GM12878 (cell line): ENCODE measurements at regions of chr2 and their contacts with region 1.

Region 1: DNA sequence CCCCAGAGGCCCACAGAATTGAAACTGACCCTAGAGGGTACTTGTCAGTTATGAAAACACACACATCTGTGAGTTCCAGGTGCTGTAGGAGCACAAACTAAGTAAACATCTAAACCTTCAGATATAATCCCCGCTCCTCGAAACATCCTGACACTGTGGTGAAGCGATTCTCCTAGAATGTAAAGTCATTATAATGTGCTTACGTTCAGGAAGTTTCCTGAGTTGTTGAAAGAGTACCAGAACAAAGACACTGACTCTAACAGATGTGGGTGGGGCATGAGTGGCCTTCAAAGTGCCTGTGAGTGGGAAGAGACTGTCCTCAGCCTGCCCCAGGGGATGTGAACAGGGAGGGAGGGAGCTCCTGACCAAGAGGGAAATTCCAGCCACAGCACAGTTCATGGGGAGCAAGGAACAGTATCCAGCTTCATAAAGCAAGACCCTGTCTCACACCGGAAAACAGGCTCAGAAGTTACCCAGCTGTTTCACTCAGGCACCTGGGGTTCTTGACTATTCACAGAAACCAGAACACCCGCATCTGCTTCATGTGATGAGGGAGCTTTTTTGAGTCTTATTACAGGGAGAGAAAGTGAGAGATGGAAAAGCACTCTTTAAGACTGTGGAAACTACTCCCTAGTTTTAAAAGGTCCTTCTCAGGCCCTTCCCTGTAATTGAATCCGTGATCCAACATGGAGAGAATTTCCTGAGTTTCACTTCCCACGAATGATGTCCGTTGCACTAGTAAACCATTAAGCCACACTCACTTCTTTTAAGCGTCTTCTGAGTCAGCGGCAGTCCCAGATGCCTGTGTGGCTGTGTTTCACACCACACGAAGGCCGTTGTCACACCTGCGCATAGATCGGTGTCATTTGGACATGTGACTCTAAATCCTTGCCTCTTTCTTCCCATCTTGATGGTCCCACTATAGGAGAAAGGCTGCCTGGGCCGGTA is 88.6 kb upstream of the EML6 start:
- DNase-seq: peak; percentile 93
- ATAC-seq: peak; percentile 81
- H3K4me3 ChIP-seq: peak overlapping the region; percentile 38
- H3K27ac ChIP-seq: peak overlapping the region; percentile 95
- H3K4me1 ChIP-seq: peaks cover 57% of the 10 kb centered on the region
- H3K27me3 ChIP-seq: no peaks in the 10 kb centered on the region
- CTCF ChIP-seq: no peak
- EP300 ChIP-seq: peak; percentile 81 to 84; a peak in 2 of 4 replicates
- POLR2A ChIP-seq: peak; percentile 52
- RAD21 ChIP-seq: 0 out of 2 replicates have a peak, but pooled peaks have one; percentile 0

Region 2: DNA sequence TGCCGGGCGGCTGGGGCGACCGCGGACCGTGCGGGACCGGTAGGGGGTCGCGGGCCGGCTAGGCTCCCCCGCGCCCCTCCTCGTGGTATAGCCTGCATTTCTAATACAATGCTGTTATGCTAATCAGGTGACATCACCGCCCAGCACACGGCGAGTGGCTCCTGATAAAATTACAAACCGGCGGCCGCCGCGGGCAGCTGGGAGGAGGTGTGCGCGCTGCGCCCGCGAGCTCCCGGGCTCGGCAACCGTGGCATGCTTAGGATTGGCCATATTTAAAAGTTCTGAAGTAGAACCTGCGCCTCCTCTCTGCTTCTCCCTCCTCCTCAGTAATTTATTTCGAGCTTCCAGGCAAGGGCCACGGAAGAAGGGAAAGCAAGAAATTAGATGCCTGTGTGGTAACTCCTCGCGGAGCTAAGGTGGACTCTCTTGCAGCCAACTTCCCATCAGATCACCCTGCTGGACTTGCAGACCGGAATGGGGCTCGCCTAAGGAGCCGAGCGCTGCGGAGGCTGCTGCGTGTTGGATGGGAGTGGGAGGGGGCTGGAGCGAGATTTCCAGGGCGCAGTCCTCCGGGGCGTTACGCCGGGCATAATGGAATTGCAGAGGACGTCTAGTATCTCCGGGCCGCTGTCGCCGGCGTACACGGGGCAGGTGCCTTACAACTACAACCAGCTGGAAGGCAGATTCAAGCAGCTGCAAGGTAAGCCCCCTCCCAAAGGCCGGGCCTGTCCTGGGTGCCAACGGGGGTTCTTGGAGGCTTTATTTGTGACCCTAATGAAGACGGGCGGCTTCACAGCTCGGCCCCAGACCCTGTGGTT is 76.4 kb before region 1 on chr2:
- CTCF ChIA-PET with region 1: interaction called, 9 read pairs
- POLR2A ChIA-PET with region 1: interaction called, 6 read pairs
- RAD21 ChIA-PET with region 1: interaction called, 36 read pairs
- SMC1A ChIA-PET with region 1: interaction called, 30 read pairs
- in situ Hi-C with region 1: no loop called
- intact Hi-C with region 1: loop called (anchors 2 kb)
- DNase-seq: no peak
- ATAC-seq: peak; percentile 63
- H3K4me3 ChIP-seq: peak overlapping the region; percentile 99
- H3K27ac ChIP-seq: peak overlapping the region; percentile 96
- H3K4me1 ChIP-seq: peaks cover 18% of the 10 kb centered on the region
- H3K27me3 ChIP-seq: no peaks in the 10 kb centered on the region
- CTCF ChIP-seq: no peak
- EP300 ChIP-seq: no peak
- POLR2A ChIP-seq: peak; percentile 78
- RAD21 ChIP-seq: no peak

Region 3: GRCh38 chr2:54570925-54571694 is 63.7 kb before region 1 on chr2:
- CTCF ChIA-PET with region 1: interaction called, 16 read pairs
- POLR2A ChIA-PET with region 1: interaction called, 15 read pairs
- RAD21 ChIA-PET with region 1: interaction called, 45 read pairs
- SMC1A ChIA-PET with region 1: interaction called, 23 read pairs
- in situ Hi-C with region 1: no loop called
- intact Hi-C with region 1: loop called (anchors 1 kb)
- DNase-seq: peak; percentile 98
- ATAC-seq: peak; percentile 55
- H3K4me3 ChIP-seq: peak overlapping the region; percentile 49; the same call in 1 of the 2 replicates
- H3K27ac ChIP-seq: peak overlapping the region; percentile 100
- H3K4me1 ChIP-seq: peaks cover 73% of the 10 kb centered on the region
- H3K27me3 ChIP-seq: no peaks in the 10 kb centered on the region
- CTCF ChIP-seq: no peak
- EP300 ChIP-seq: peak; percentile 80 to 96
- POLR2A ChIP-seq: peak; percentile 74
- RAD21 ChIP-seq: no peak; the same call in 1 of the 2 replicates

Region 4: GRCh38 chr2:54613794-54614257 is 21.0 kb before region 1 on chr2:
- CTCF ChIA-PET with region 1: interaction called, 5 read pairs
- POLR2A ChIA-PET with region 1: no interaction called
- RAD21 ChIA-PET with region 1: interaction called, 10 read pairs
- SMC1A ChIA-PET with region 1: interaction called, 8 read pairs
- in situ Hi-C with region 1: no loop called
- intact Hi-C with region 1: no loop called
- DNase-seq: no peak
- ATAC-seq: peak; percentile 57
- H3K4me3 ChIP-seq: no peak overlapping the region
- H3K27ac ChIP-seq: no peak overlapping the region
- H3K4me1 ChIP-seq: peaks cover 2% of the 10 kb centered on the region; the same call in 1 of the 2 replicates
- H3K27me3 ChIP-seq: no peaks in the 10 kb centered on the region
- CTCF ChIP-seq: no peak
- EP300 ChIP-seq: no peak
- POLR2A ChIP-seq: no peak
- RAD21 ChIP-seq: no peak

Region 5: DNA sequence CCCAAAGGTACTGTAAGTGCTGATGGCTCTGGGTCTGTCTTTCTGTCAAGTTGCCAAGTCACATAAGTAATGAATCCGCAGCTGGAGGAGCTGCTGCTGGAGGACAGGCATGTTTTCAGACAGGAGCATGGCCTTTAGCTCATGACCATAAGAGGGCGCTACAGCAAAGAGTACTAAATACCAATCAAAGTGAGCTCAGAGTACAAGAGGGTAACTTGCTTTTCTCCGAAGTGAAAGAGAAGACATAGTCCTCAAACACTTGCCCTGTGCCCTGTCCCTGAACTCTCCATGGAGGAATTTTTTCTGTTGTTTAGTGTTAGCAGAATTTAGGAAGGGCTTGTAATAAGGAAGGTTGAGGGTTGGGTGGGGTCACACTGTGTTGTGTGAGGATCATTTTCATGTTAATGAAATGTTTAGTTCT is 30.6 kb after region 1 on chr2:
- CTCF ChIA-PET with region 1: interaction called, 10 read pairs
- POLR2A ChIA-PET with region 1: no interaction called
- RAD21 ChIA-PET with region 1: interaction called, 4 read pairs
- SMC1A ChIA-PET with region 1: interaction called, 5 read pairs
- in situ Hi-C with region 1: no loop called
- intact Hi-C with region 1: no loop called
- DNase-seq: no peak
- ATAC-seq: peak; percentile 80
- H3K4me3 ChIP-seq: no peak overlapping the region
- H3K27ac ChIP-seq: no peak overlapping the region
- H3K4me1 ChIP-seq: no peaks in the 10 kb centered on the region
- H3K27me3 ChIP-seq: no peaks in the 10 kb centered on the region
- CTCF ChIP-seq: peak; percentile 55 to 71 (median 71)
- EP300 ChIP-seq: no peak
- POLR2A ChIP-seq: no peak
- RAD21 ChIP-seq: peak; percentile 69

Region 6: GRCh38 chr2:54680397-54681041 is 45.7 kb after region 1 on chr2:
- CTCF ChIA-PET with region 1: no interaction called
- POLR2A ChIA-PET with region 1: interaction called, 3 read pairs
- RAD21 ChIA-PET with region 1: interaction called, 22 read pairs
- SMC1A ChIA-PET with region 1: interaction called, 12 read pairs
- in situ Hi-C with region 1: no loop called
- intact Hi-C with region 1: loop called (anchors 2 kb)
- DNase-seq: peak; percentile 77
- ATAC-seq: peak; percentile 81
- H3K4me3 ChIP-seq: peak overlapping the region; percentile 34; the same call in 1 of the 2 replicates
- H3K27ac ChIP-seq: peak overlapping the region; percentile 47
- H3K4me1 ChIP-seq: peaks cover 31% of the 10 kb centered on the region
- H3K27me3 ChIP-seq: no peaks in the 10 kb centered on the region; a peak in 1 of 4 replicates
- CTCF ChIP-seq: no peak
- EP300 ChIP-seq: peak; percentile 48 to 84; a peak in 3 of 4 replicates
- POLR2A ChIP-seq: no peak
- RAD21 ChIP-seq: no peak

Region 7: GRCh38 chr2:54773838-54774237 is 139.0 kb after region 1 on chr2:
- CTCF ChIA-PET with region 1: no interaction called
- POLR2A ChIA-PET with region 1: no interaction called
- RAD21 ChIA-PET with region 1: no interaction called
- SMC1A ChIA-PET with region 1: no interaction called
- in situ Hi-C with region 1: no loop called
- intact Hi-C with region 1: no loop called
- DNase-seq: no peak
- ATAC-seq: no peak
- H3K4me3 ChIP-seq: no peak overlapping the region
- H3K27ac ChIP-seq: no peak overlapping the region
- H3K4me1 ChIP-seq: no peaks in the 10 kb centered on the region
- H3K27me3 ChIP-seq: no peaks in the 10 kb centered on the region
- CTCF ChIP-seq: no peak
- EP300 ChIP-seq: no peak
- POLR2A ChIP-seq: no peak
- RAD21 ChIP-seq: no peak